ENCODE measurements at regions of chr2 and their contacts with region 1.

Region 1: DNA sequence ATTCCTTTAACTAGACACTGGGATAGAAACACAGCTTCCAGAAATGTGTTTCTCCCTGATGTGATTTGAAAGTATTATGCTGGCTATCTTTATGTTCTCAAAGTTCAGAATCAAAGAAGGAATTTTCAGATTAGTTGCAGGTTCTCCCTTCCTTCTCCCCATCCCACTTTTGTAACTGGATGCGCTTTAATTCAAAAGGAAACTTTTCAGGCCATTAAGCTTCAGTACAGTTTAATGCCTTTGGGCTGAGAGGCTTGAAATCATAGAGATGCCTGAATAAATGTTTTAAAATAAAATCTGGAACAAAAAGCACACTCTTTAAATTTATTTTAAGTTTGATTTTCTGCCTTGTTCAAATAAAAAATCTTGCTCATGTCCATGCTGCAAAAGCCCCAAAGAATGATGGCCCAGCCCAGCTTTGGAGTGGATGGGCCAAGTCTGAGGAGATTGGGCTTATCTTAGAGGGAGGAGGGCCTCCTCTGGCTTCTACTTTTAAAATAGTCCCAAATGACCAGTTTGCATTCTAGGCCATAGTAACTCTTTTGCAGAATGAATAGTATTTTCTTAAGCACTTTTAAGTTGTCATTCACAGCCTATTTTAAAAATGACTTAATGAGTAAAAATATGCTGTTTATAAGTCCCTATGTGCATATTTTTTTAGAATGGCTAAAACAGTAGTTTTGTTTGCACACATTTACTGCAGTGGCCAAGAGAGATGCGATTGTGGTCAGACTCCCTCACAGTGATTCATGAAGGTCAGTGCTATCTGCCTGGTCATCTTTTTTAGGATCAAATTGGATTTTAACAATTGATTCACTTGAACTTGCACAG is 129.2 kb downstream of the MTX2 start:
- DNase-seq: no peak
- ATAC-seq: no peak
- H3K4me3 ChIP-seq: no peak overlapping the region
- H3K27ac ChIP-seq: no peak overlapping the region
- H3K4me1 ChIP-seq: peaks cover 0 to 3% of the 10 kb centered on the region in 2 donors
- H3K27me3 ChIP-seq: no peaks in the 10 kb centered on the region

Region 2: GRCh38 chr2:176333685-176334084 is 64.8 kb before region 1 on chr2:
- intact Hi-C with region 1: loop called in 1 of 2 experiments (anchors 10 kb)
- DNase-seq: no peak
- ATAC-seq: no peak
- H3K4me3 ChIP-seq: no peak overlapping the region
- H3K27ac ChIP-seq: no peak overlapping the region
- H3K4me1 ChIP-seq: no peaks in the 10 kb centered on the region
- H3K27me3 ChIP-seq: no peaks in the 10 kb centered on the region

Region 3: GRCh38 chr2:176356251-176356650 is 42.2 kb before region 1 on chr2:
- intact Hi-C with region 1: no loop called
- DNase-seq: no peak
- ATAC-seq: no peak
- H3K4me3 ChIP-seq: no peak overlapping the region
- H3K27ac ChIP-seq: no peak overlapping the region
- H3K4me1 ChIP-seq: no peaks in the 10 kb centered on the region
- H3K27me3 ChIP-seq: no peaks in the 10 kb centered on the region

Region 4: GRCh38 chr2:176491172-176491904 is 92.9 kb after region 1 on chr2:
- intact Hi-C with region 1: no loop called
- DNase-seq: peak in 1 of 2 donors; percentile 55
- ATAC-seq: peak; percentile 65
- H3K4me3 ChIP-seq: no peak overlapping the region
- H3K27ac ChIP-seq: no peak overlapping the region
- H3K4me1 ChIP-seq: no peaks in the 10 kb centered on the region
- H3K27me3 ChIP-seq: peaks cover 0 to 2% of the 10 kb centered on the region in 2 donors

Measured in aorta (tissue), 5 donors.